ENCODE measurements at regions of chr3 and their contacts with region 1.

Region 1: GRCh38 chr3:131020122-131020693 is 6.4 kb downstream of the ASTE1 start:
- DNase-seq: no peak
- ATAC-seq: no peak
- H3K4me3 Mint-ChIP-seq: no peak overlapping the region
- H3K27ac Mint-ChIP-seq: no peak overlapping the region
- H3K4me1 Mint-ChIP-seq: peaks cover 58% of the 10 kb centered on the region
- H3K27me3 Mint-ChIP-seq: no peaks in the 10 kb centered on the region

Region 2: GRCh38 chr3:130293247-130293646 is 727.0 kb before region 1 on chr3:
- CTCF ChIA-PET with region 1: no interaction called
- POLR2A ChIA-PET with region 1: interaction called, 10 read pairs
- intact Hi-C with region 1: no loop called
- DNase-seq: no peak
- ATAC-seq: no peak
- H3K4me3 Mint-ChIP-seq: no peak overlapping the region
- H3K27ac Mint-ChIP-seq: no peak overlapping the region
- H3K4me1 Mint-ChIP-seq: no peaks in the 10 kb centered on the region
- H3K27me3 Mint-ChIP-seq: peaks cover 21% of the 10 kb centered on the region

Measured in activated CD4-positive, alpha-beta T cell treated with anti-CD3 and anti-CD28 coated beads for 36 hours (primary cell).